Left colon (tissue), 2 donors: ENCODE measurements at regions of chr9 and their contacts with region 1.

Region 1: GRCh38 chr9:71121275-71122021 is at the start of gene TRPM3:
- DNase-seq: no peak
- ATAC-seq: no peak
- total RNA-seq, gene TRPM3: 0.22 to 0.73 TPM

Region 2: GRCh38 chr9:71072587-71072986 is 48.9 kb before region 1 on chr9:
- intact Hi-C with region 1: loop called in 1 of 2 experiments (anchors 10 kb)
- DNase-seq: no peak
- ATAC-seq: no peak